Mammary epithelial cell (primary cell): ENCODE measurements at regions of chr1 and their contacts with region 1.

Region 1: GRCh38 chr1:59672851-59673572 is 141.7 kb upstream of the HOOK1 start:
- DNase-seq: peak; percentile 94
- H3K4me3 ChIP-seq: peak overlapping the region in 1 of 3 experiments; percentile 2
- H3K27ac ChIP-seq: peak overlapping the region; percentile 97
- H3K4me1 ChIP-seq: peaks cover 50% of the 10 kb centered on the region
- H3K27me3 ChIP-seq: no peaks in the 10 kb centered on the region
- CTCF ChIP-seq: no peak

Region 2: DNA sequence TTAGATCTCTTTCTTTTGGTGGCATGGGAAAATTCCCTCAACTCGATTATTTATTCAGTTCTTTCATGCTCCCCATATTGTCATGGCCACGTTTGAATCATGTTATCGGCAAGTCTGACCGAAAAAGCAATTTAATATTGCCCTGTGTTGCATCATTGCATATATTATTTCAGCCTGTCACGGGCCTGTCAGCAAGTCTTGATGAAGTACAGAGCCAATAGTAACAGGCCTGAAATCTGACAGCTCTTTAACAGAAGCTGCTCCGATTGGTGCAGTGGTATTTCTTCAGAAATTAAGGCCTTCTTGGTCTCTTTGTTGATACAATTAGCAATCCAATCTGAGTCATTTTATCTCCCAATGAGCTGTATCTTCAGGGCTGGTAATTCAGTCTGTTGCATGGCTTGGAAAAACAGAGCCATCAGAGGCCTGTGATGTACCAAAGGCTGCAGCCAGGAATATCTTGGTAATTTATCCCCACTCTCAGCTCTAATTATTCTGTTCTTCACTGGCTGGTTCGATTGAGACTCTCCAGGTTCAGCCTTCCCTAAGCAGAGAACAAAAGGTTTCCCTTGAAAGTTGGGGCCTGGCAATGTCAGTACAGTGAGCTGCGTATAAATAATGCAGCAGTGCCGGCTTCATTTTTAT is 226.6 kb before region 1 on chr1:
- CTCF ChIA-PET with region 1: no interaction called
- dilution Hi-C with region 1: no loop called
- in situ Hi-C with region 1: no loop called
- intact Hi-C with region 1: loop called (anchors 5 kb)
- DNase-seq: peak; percentile 62
- H3K4me3 ChIP-seq: no peak overlapping the region
- H3K27ac ChIP-seq: no peak overlapping the region
- H3K4me1 ChIP-seq: peaks cover 34% of the 10 kb centered on the region
- H3K27me3 ChIP-seq: no peaks in the 10 kb centered on the region
- CTCF ChIP-seq: no peak

Region 3: DNA sequence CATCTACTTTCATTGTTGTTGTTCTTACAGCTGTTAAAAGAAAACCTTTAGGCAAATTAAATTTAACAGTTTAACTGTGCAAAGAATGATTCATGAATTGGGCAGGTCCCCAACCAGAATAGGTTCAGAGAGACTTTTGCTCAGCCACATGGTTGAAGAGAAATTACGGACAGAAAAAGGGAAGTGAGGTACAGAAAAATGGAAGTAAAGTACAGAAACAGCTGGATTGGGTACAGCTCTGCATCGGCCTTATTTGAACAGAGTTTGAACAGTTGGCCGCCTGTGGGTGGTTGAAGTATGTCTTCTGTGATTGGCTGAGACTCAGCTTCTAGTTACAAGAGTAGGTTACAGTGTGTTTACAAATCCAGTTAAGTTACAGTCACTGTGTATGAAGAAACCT is 166.1 kb before region 1 on chr1:
- CTCF ChIA-PET with region 1: no interaction called
- dilution Hi-C with region 1: no loop called
- in situ Hi-C with region 1: no loop called
- intact Hi-C with region 1: no loop called
- DNase-seq: no peak
- H3K4me3 ChIP-seq: no peak overlapping the region
- H3K27ac ChIP-seq: no peak overlapping the region
- H3K4me1 ChIP-seq: peaks cover 9% of the 10 kb centered on the region
- H3K27me3 ChIP-seq: no peaks in the 10 kb centered on the region
- CTCF ChIP-seq: no peak

Region 4: GRCh38 chr1:59596441-59596861 is 76.6 kb before region 1 on chr1:
- CTCF ChIA-PET with region 1: no interaction called
- dilution Hi-C with region 1: no loop called
- in situ Hi-C with region 1: no loop called
- intact Hi-C with region 1: loop called (anchors 2 kb)
- DNase-seq: peak; percentile 98
- H3K4me3 ChIP-seq: no peak overlapping the region
- H3K27ac ChIP-seq: peak overlapping the region; percentile 87
- H3K4me1 ChIP-seq: peaks cover 38% of the 10 kb centered on the region
- H3K27me3 ChIP-seq: no peaks in the 10 kb centered on the region
- CTCF ChIP-seq: no peak

Region 5: DNA sequence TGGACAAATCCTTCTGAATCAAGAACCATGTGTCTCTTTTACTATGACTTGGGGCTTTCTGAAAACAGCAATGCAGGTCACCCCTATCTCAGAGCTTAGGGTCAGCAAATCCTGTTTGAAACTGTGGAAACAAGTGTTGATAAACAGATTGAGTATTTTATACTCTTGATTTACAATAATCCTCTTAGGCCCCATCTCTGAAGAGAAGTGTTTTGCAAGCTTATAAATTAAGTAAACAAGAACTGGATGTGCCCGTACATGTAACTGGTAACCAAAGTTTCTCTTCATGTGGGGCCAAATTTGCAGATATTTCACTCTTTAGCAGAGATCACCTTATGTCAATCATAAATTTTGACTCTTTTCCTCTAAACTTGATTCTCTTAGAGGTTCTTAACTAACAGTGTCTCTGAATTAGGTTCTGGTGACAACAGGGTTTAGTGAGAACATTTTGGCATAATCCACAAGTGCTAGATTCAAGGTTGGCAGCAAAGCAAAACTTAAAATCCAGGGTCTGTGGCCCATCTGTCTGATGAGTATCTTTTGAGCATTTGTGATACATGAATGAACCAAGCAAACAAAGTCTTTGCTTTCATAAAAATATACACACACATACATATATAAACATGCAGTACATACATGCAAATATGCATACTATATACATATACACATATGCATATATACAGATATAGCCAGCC is 41.3 kb before region 1 on chr1:
- CTCF ChIA-PET with region 1: no interaction called
- dilution Hi-C with region 1: loop called (anchors 5 kb)
- in situ Hi-C with region 1: no loop called
- intact Hi-C with region 1: no loop called
- DNase-seq: peak; percentile 36
- H3K4me3 ChIP-seq: no peak overlapping the region
- H3K27ac ChIP-seq: no peak overlapping the region
- H3K4me1 ChIP-seq: peaks cover 19% of the 10 kb centered on the region
- H3K27me3 ChIP-seq: no peaks in the 10 kb centered on the region
- CTCF ChIP-seq: no peak

Region 6: DNA sequence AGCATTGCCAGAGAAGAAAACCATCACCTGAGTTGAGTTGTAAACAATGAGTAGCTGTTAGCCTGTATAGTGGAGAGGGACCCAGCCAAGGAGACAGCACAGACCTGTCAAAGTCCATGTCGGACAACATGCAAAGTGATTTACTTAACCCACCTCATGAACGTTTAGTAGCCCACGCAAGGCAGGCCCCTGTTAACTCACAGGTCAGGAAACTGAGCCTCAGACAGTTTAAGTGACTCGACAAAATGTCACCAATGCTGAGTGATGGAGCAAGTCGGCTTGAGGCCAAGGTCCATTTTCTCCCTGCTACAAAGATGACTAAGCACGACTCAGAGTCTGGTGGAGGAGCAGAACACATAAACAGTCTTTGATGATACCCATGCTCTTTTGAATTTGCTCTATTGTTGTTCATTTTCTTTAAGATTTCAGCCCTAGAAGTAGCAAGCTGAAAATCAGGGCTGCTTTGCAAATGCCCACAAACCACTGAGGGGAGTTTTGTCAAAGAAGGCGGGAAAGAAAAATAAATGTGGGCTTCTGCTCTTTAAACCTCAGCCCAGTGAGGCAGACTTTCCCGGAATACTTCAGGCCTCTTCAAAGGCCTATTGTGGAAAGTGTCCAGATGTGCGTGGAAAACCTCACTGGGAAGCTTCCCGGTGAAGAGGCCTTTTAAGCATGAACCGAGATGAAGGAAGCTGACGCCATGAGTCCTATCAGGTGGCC is 57.9 kb after region 1 on chr1:
- CTCF ChIA-PET with region 1: no interaction called
- dilution Hi-C with region 1: no loop called
- in situ Hi-C with region 1: no loop called
- intact Hi-C with region 1: loop called (anchors 2 kb)
- DNase-seq: peak; percentile 92
- H3K4me3 ChIP-seq: no peak overlapping the region
- H3K27ac ChIP-seq: peak overlapping the region; percentile 64
- H3K4me1 ChIP-seq: peaks cover 30% of the 10 kb centered on the region
- H3K27me3 ChIP-seq: no peaks in the 10 kb centered on the region
- CTCF ChIP-seq: no peak

Region 7: DNA sequence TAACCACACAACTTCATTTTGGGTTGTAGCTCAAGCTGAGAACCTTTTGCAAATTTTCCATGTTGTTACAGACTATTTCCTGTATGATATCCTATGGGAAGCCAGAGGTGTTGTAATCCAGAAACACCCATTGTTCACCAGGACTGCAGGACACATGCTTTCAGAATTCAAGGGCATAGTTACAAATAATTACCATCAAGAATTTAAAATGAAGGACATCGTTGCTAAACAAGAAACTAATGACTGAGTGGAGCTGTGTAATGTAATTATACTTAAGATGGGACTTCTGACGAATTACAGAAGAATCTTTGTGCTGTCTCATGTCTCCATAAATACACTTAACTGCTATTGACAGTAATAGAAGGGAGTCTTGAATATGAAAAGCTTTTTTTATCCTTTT is 94.1 kb after region 1 on chr1:
- CTCF ChIA-PET with region 1: no interaction called
- dilution Hi-C with region 1: no loop called
- in situ Hi-C with region 1: no loop called
- intact Hi-C with region 1: no loop called
- DNase-seq: no peak
- H3K4me3 ChIP-seq: no peak overlapping the region
- H3K27ac ChIP-seq: no peak overlapping the region
- H3K4me1 ChIP-seq: peaks cover 25% of the 10 kb centered on the region
- H3K27me3 ChIP-seq: no peaks in the 10 kb centered on the region
- CTCF ChIP-seq: no peak

Region 8: DNA sequence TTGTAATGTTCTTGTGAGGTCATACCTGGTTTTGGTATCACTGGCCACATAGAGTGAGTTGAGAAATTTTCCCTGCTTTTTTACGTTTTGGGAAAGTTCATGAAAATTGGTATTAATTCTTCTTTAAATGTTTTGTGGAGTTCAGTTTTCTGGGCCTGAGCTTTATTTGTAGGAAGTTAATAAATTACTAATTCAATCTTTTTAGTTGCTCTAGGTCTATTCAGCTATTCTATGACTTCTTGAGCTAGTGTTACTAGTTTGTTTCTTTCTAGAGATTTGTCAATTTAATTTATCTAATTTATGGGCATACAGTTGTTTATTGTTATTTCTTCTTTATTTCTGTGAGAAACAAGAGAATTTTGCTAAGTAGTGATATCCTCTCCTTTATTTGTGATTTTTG is 179.1 kb after region 1 on chr1:
- CTCF ChIA-PET with region 1: no interaction called
- dilution Hi-C with region 1: no loop called
- in situ Hi-C with region 1: no loop called
- intact Hi-C with region 1: no loop called
- DNase-seq: no peak
- H3K4me3 ChIP-seq: no peak overlapping the region
- H3K27ac ChIP-seq: no peak overlapping the region
- H3K4me1 ChIP-seq: no peaks in the 10 kb centered on the region
- H3K27me3 ChIP-seq: no peaks in the 10 kb centered on the region
- CTCF ChIP-seq: no peak